B cell (primary cell): ENCODE measurements at regions of chr4 and their contacts with region 1.

Region 1: GRCh38 chr4:7067452-7068278 is at the start of gene GRPEL1:
- DNase-seq: peak; percentile 100
- ATAC-seq: peak; percentile 91
- H3K4me3 ChIP-seq: peak within 1 kb of the TSS; percentile 73 to 90 (median 80)
- H3K4me3 Mint-ChIP-seq: peak within 1 kb of the TSS; percentile 94
- H3K27ac ChIP-seq: peak within 1 kb of the TSS; percentile 73 to 75
- H3K27ac Mint-ChIP-seq: peak within 1 kb of the TSS; percentile 94
- H3K4me1 ChIP-seq: peaks cover 26 to 37% of the 10 kb centered on the region in 2 donors
- H3K4me1 Mint-ChIP-seq: peaks cover 44% of the 10 kb centered on the region
- H3K27me3 ChIP-seq: peaks cover 0 to 3% (median 1%) of the 10 kb centered on the region in 4 experiments
- H3K27me3 Mint-ChIP-seq: peaks cover 3% of the 10 kb centered on the region
- CTCF ChIP-seq: no peak
- total RNA-seq, gene GRPEL1: 19.6 and 26.0 TPM in 2 replicates

Region 2: DNA sequence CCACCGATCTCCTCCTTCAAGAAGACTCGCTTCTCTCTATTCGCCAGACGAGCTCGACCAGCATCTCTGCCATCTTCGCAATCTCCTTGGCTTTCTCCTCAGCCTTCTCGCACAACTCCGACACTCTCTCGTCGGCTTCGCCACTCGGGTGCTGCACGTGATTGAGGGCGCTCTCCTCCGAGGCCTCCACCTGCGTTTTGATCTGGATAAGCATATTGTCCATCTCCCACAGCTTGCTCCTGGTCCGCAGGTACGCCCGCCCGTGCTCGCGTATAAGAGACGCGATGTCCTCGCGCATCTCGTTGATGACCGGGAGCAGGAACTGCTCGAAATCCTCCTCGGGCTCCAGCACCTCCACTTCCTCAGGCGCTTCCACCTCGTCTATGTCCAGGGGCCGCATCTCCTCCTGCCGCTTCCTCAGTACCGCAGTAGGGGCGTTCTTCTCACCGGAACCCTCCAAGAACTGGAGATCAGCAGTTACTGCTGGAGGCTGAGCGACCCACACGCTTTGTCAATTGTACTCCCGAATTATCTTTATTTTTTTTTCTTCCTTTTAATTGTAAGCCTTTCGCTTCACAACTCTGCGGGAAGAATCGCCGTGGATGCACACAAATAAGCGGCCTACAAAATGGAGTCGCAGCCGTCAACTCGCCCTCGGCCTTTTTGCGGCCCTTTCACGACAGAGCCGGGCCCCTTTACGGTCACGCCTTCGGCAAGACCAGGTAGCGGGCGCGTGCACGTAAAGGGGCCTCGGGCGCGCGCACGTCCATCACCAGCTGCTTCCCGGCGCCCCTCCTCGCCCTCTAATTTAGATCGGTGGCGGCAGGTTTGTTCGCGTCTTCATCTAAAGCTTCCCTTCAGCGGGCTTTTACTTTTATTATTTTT is 358.2 kb before region 1 on chr4 and contains the start of gene MRFAP1L1:
- CTCF ChIA-PET with region 1: interaction called, 148 read pairs
- POLR2A ChIA-PET with region 1: no interaction called
- intact Hi-C with region 1: loop called (anchors 1 kb)
- DNase-seq: peak; percentile 97
- ATAC-seq: peak; percentile 83
- H3K4me3 ChIP-seq: peak within 1 kb of the TSS; percentile 72 to 90 (median 77)
- H3K4me3 Mint-ChIP-seq: peak within 1 kb of the TSS; percentile 99
- H3K27ac ChIP-seq: peak within 1 kb of the TSS; percentile 80 to 83
- H3K27ac Mint-ChIP-seq: peak within 1 kb of the TSS; percentile 98
- H3K4me1 ChIP-seq: peaks cover 32 to 36% of the 10 kb centered on the region in 2 donors
- H3K4me1 Mint-ChIP-seq: peaks cover 57% of the 10 kb centered on the region
- H3K27me3 ChIP-seq: no peaks in the 10 kb centered on the region
- H3K27me3 Mint-ChIP-seq: no peaks in the 10 kb centered on the region
- CTCF ChIP-seq: no peak
- total RNA-seq, gene MRFAP1L1: 53.8 and 57.2 TPM in 2 replicates

Region 3: DNA sequence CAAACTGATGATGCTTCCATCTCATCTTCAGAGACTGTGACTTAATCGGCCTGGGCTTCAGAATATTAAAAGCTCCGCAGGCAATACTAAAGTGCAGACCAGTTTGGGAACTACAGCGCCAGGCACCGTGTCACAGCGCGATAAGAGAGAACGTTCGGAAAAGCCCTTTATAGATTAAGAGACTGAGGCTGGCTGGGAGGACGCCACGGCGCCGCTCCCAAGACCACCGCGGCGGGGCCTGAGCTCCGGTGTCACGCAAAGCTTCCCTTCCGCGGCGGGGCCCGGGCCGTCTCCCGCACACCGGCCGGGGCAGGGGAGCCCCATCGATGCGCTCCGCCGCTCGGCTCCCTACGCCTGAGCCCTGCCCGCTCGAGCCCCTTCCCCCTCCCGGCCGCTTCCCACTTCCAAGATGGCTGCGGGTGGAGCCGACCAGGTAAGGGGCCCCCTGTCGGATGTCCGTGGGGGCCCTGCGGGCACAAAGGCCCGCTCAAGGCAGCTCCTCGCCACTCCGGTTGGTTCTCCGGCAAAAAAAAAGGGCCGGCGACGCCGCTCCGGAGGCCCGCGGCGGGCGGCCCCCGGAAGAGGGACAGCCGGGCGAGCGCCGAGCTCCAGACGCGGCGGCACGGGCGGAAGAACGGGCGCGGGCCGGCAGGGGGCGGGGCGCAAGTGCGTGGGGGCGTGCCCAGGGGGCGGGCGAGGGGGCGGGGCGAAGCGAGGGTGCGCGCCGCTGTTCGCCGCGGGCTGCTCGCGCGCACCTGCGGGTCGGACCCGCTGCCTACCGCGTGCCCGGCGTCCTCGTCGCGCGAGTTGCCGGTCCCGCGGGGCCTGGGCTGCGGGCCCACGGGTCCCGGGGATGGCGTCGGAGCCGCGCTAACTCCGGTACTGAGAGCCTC is 158.3 kb before region 1 on chr4 and contains the start of gene TBC1D14:
- CTCF ChIA-PET with region 1: interaction called, 41 read pairs
- POLR2A ChIA-PET with region 1: interaction called, 10 read pairs
- intact Hi-C with region 1: loop called (anchors 1 kb)
- DNase-seq: peak; percentile 94
- ATAC-seq: peak; percentile 89
- H3K4me3 ChIP-seq: peak within 1 kb of the TSS; percentile 72 to 85 (median 78)
- H3K4me3 Mint-ChIP-seq: peak within 1 kb of the TSS; percentile 95
- H3K27ac ChIP-seq: peak within 1 kb of the TSS; percentile 93 to 97
- H3K27ac Mint-ChIP-seq: peak within 1 kb of the TSS; percentile 94
- H3K4me1 ChIP-seq: peaks cover 33 to 43% of the 10 kb centered on the region in 2 donors
- H3K4me1 Mint-ChIP-seq: peaks cover 38% of the 10 kb centered on the region
- H3K27me3 ChIP-seq: peaks cover 0 to 3% (median 0%) of the 10 kb centered on the region in 4 experiments
- H3K27me3 Mint-ChIP-seq: peaks cover 8% of the 10 kb centered on the region
- CTCF ChIP-seq: no peak
- total RNA-seq, gene TBC1D14: 42.0 and 44.1 TPM in 2 replicates

Region 4: DNA sequence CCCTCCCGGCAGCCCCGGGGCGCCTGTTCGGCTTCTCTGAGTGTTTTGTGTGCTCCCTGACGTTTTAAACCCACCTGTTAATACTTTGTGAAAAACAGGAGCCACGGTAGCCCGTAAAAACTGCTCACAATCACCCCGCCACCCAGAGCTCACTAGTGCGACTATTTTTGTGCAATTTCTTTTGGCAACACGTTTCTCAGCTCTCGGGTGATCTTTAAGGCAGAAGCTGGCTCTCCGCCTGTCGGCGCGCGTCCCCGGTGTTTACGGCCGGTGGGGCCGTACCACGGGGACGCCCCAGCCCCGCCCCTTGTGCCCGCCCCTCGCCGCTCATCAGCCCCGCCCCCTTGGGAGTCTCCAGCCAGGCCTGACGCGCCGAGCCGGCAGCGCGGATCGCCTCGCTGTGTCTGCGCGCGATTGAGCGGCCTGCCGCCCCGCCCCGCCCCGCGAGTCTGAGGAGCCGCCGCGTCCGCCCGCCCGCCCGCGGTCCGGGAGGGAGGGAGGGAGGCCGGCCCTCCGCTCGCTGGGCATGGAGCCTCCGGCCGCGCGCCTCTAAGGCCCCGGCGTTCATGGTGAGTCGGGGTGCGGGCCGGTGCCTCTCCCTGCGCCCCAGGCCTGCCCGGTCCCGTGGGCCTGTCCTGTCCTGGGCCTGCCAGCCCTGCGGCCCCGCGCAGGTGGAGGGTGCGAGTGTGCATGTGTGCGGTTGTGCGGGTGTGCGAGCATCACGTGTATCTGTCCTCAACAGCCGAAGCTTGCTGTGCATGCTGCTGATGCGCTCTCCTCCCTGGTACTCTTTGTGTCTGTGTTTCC is 80.7 kb before region 1 on chr4:
- CTCF ChIA-PET with region 1: interaction called, 20 read pairs
- POLR2A ChIA-PET with region 1: interaction called, 15 read pairs
- intact Hi-C with region 1: loop called (anchors 1 kb)
- DNase-seq: peak; percentile 96
- ATAC-seq: peak; percentile 93
- H3K4me3 ChIP-seq: peak overlapping the region; percentile 80 to 93 (median 84)
- H3K4me3 Mint-ChIP-seq: peak overlapping the region; percentile 96
- H3K27ac ChIP-seq: peak overlapping the region; percentile 91 to 95
- H3K27ac Mint-ChIP-seq: peak overlapping the region; percentile 98
- H3K4me1 ChIP-seq: peaks cover 57 to 75% of the 10 kb centered on the region in 2 donors
- H3K4me1 Mint-ChIP-seq: peaks cover 87% of the 10 kb centered on the region
- H3K27me3 ChIP-seq: no peaks in the 10 kb centered on the region
- H3K27me3 Mint-ChIP-seq: no peaks in the 10 kb centered on the region
- CTCF ChIP-seq: no peak

Region 5: DNA sequence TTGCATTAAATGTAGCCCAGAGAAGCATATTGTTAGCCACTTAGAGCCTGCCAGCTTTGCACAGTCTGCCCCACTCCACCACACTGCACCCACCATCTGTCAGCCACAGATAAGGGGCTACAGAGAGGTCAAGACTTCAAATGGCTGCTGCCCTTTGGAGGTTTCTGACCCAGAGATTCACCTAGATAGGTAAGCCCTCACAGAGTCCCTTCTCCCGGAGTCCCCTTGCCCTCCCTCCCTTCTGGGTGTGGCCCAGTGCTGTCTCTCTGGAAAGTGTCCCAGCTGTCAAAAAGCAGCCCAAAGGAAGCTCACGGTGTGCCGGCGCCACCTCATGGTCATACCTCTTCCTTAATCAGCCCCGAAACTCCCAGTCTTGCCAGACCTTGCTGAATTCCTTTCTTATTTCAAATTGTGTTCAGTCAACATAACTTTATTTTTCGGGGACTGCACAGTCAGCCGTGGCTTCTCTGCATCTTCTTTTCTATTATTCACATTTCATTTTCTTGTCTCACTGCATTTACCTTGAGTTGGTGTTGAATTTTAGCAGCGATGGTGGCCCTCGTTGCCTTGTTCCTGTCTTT is 14.3 kb after region 1 on chr4:
- CTCF ChIA-PET with region 1: interaction called, 13 read pairs
- POLR2A ChIA-PET with region 1: no interaction called
- intact Hi-C with region 1: no loop called
- DNase-seq: no peak
- ATAC-seq: no peak
- H3K4me3 ChIP-seq: no peak overlapping the region
- H3K4me3 Mint-ChIP-seq: no peak overlapping the region
- H3K27ac ChIP-seq: no peak overlapping the region
- H3K27ac Mint-ChIP-seq: no peak overlapping the region
- H3K4me1 ChIP-seq: no peaks in the 10 kb centered on the region
- H3K4me1 Mint-ChIP-seq: no peaks in the 10 kb centered on the region
- H3K27me3 ChIP-seq: peaks cover 0 to 33% (median 23%) of the 10 kb centered on the region in 4 experiments
- H3K27me3 Mint-ChIP-seq: peaks cover 54% of the 10 kb centered on the region
- CTCF ChIP-seq: no peak